GM12878 (cell line): ENCODE measurements at regions of chr1 and their contacts with region 1.

Region 1: DNA sequence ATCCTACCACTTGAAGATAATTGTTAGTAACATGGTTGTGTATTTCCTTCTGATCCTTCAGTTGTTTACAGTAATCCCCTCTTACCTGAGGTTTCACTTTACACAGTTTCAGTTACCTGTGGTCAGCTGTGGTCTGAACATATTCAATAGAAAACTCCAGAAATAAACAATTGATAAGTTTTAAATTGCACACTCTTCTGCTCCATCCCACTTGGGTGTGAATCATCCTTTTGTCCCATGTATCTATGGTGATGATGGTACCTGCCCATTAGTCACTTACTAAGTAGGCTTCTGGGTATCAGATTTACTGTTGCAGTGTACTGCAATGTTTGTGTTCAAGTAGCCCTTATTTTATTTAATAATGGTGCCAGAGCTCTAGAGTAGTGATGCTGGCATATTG is 62.5 kb downstream of the OSBPL9 start:
- DNase-seq: peak; percentile 21
- ATAC-seq: peak; percentile 87
- H3K4me3 ChIP-seq: no peak overlapping the region
- H3K27ac ChIP-seq: no peak overlapping the region
- H3K4me1 ChIP-seq: peaks cover 13% of the 10 kb centered on the region; the same call in 1 of the 2 replicates
- H3K27me3 ChIP-seq: no peaks in the 10 kb centered on the region
- CTCF ChIP-seq: no peak
- EP300 ChIP-seq: no peak
- POLR2A ChIP-seq: no peak
- RAD21 ChIP-seq: no peak

Region 2: DNA sequence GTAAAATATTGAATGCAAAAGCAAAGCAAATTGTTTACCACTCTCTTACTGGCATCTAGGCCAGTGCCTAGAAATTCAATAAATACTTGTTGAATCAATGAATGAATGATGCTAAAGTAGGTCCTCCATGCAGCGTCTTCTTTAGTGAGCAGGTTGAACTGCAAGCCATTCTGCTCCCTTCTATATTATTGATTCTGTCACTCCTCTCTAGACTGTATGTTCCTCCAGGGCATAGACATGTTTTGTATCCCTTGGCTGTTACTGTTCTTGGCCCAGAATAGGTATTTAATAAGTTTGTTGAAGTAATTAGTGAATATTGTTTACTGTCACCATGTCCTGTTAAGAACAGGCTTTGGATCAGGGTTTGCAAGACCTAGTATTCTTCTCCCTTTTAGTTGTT is 18.9 kb before region 1 on chr1:
- CTCF ChIA-PET with region 1: no interaction called
- POLR2A ChIA-PET with region 1: no interaction called
- RAD21 ChIA-PET with region 1: no interaction called
- SMC1A ChIA-PET with region 1: no interaction called
- in situ Hi-C with region 1: no loop called
- intact Hi-C with region 1: no loop called
- DNase-seq: no peak
- ATAC-seq: no peak
- H3K4me3 ChIP-seq: no peak overlapping the region
- H3K27ac ChIP-seq: no peak overlapping the region
- H3K4me1 ChIP-seq: no peaks in the 10 kb centered on the region
- H3K27me3 ChIP-seq: no peaks in the 10 kb centered on the region
- CTCF ChIP-seq: no peak
- EP300 ChIP-seq: no peak
- POLR2A ChIP-seq: no peak
- RAD21 ChIP-seq: no peak

Region 3: GRCh38 chr1:51690285-51690961 is 11.0 kb after region 1 on chr1:
- CTCF ChIA-PET with region 1: interaction called, 3 read pairs
- POLR2A ChIA-PET with region 1: interaction called, 10 read pairs
- RAD21 ChIA-PET with region 1: no interaction called
- SMC1A ChIA-PET with region 1: interaction called, 6 read pairs
- in situ Hi-C with region 1: no loop called
- intact Hi-C with region 1: no loop called
- DNase-seq: no peak
- ATAC-seq: peak; percentile 38; the same call in 1 of the 3 replicates
- H3K4me3 ChIP-seq: no peak overlapping the region
- H3K27ac ChIP-seq: no peak overlapping the region
- H3K4me1 ChIP-seq: peaks cover 7% of the 10 kb centered on the region
- H3K27me3 ChIP-seq: no peaks in the 10 kb centered on the region
- CTCF ChIP-seq: no peak
- EP300 ChIP-seq: no peak
- POLR2A ChIP-seq: no peak
- RAD21 ChIP-seq: no peak

Region 4: GRCh38 chr1:51760872-51761271 is 81.4 kb after region 1 on chr1:
- CTCF ChIA-PET with region 1: no interaction called
- POLR2A ChIA-PET with region 1: no interaction called
- RAD21 ChIA-PET with region 1: no interaction called
- SMC1A ChIA-PET with region 1: no interaction called
- in situ Hi-C with region 1: no loop called
- intact Hi-C with region 1: loop called (anchors 5 kb)
- DNase-seq: no peak
- ATAC-seq: no peak
- H3K4me3 ChIP-seq: no peak overlapping the region
- H3K27ac ChIP-seq: no peak overlapping the region
- H3K4me1 ChIP-seq: no peaks in the 10 kb centered on the region
- H3K27me3 ChIP-seq: no peaks in the 10 kb centered on the region
- CTCF ChIP-seq: no peak
- EP300 ChIP-seq: no peak
- POLR2A ChIP-seq: no peak
- RAD21 ChIP-seq: no peak